GM10248 (cell line): ENCODE measurements at regions of chr7 and their contacts with region 1.

Region 1: GRCh38 chr7:144378651-144379050 is 23.4 kb downstream of the ARHGEF5 start:
- DNase-seq: no peak
- CTCF ChIP-seq: no peak

Region 2: GRCh38 chr7:144256112-144256511 is 122.5 kb before region 1 on chr7:
- CTCF ChIA-PET with region 1: no interaction called
- POLR2A ChIA-PET with region 1: no interaction called
- DNase-seq: no peak
- CTCF ChIP-seq: no peak

Region 3: DNA sequence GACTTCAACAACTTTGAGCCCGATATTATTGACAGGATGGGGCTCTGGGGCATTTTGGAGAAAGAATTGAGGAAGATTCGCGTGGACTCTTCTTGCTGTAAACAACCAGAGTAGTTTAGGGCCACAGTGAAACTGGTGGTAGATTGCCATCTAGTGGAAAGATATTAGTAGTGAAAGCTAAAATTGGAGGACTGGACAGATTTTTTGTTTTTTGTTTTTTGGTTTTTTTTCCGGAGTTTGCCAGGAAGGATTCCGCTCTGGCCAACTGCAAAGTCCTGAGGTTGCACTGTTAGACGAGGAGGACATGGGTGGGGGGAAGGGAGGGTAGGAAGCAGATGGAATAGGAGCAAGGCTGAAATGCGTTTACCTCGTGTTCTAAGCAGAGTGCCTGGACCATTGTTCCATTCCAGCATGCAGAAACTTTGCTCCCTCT is 13.2 kb after region 1 on chr7:
- CTCF ChIA-PET with region 1: interaction called, 17 read pairs
- POLR2A ChIA-PET with region 1: no interaction called
- DNase-seq: peak; percentile 65
- CTCF ChIP-seq: peak; percentile 54

Region 4: GRCh38 chr7:144407266-144407931 is 28.7 kb after region 1 on chr7:
- CTCF ChIA-PET with region 1: no interaction called
- POLR2A ChIA-PET with region 1: no interaction called
- DNase-seq: no peak
- CTCF ChIP-seq: no peak

Region 5: DNA sequence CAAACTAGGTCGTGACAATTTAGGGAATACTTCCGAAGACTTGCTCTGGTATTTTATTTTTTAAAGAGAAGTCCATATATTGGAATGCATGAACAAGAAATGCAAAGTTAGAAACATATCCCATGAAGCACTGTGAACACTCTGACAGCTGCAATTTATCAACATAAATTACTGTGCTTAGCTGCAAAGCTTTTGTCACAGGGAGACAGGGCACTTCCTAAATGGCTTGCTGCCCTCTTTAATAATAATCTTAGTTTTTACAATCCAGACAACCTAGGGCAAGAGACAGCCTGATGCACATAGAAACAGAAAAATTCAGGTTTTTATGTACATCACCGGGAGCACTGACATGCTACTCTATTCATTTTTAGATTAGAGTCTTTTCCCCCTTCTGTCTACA is 103.2 kb after region 1 on chr7:
- CTCF ChIA-PET with region 1: no interaction called
- POLR2A ChIA-PET with region 1: no interaction called
- DNase-seq: no peak
- CTCF ChIP-seq: no peak